ENCODE measurements at regions of chr9 and their contacts with region 1.

Region 1: GRCh38 chr9:20622330-20623020 is at the start of gene MLLT3:
- DNase-seq: peak; percentile 81 to 84 (median 83)
- H3K4me3 ChIP-seq: peak within 1 kb of the TSS; percentile 90 to 95 (median 92)
- H3K4me3 Mint-ChIP-seq: peak within 1 kb of the TSS; percentile 99 to 100
- H3K27ac ChIP-seq: peak within 1 kb of the TSS in 1 of 2 donors; percentile 28
- H3K27ac Mint-ChIP-seq: peak within 1 kb of the TSS; percentile 12 to 87 (median 72)
- H3K4me1 ChIP-seq: peaks cover 37 to 41% of the 10 kb centered on the region in 2 donors
- H3K4me1 Mint-ChIP-seq: peaks cover 37% of the 10 kb centered on the region
- H3K27me3 ChIP-seq: peaks cover 8 to 24% of the 10 kb centered on the region in 2 donors
- H3K27me3 Mint-ChIP-seq: peaks cover 24 to 38% (median 32%) of the 10 kb centered on the region in 3 donors
- CTCF ChIP-seq: no peak
- polyA plus RNA-seq, gene MLLT3: 0.81 to 2.3 (median 1.5) TPM

Region 2: DNA sequence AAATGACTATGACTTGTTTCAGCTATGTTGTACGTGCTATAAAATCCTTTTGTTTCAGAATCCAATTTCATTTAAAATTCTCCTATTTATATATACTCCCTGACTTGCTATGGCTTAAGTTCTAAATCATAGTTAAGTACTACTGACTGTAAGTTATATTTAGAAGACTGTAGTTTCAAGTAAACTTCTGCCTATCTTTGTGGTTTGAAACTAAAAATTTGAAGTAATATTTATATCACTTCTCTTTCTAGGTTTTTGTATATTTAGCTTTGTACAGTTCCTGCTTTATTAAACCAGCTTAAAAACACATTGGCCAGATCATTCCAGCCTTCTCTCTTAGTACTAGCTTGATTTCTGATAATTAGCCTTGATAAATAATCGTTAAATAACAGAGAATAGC is 196.5 kb before region 1 on chr9:
- intact Hi-C with region 1: no loop called
- DNase-seq: no peak
- H3K4me3 ChIP-seq: no peak overlapping the region
- H3K4me3 Mint-ChIP-seq: no peak overlapping the region
- H3K27ac ChIP-seq: no peak overlapping the region
- H3K27ac Mint-ChIP-seq: no peak overlapping the region
- H3K4me1 ChIP-seq: no peaks in the 10 kb centered on the region
- H3K4me1 Mint-ChIP-seq: peaks cover 12% of the 10 kb centered on the region
- H3K27me3 ChIP-seq: no peaks in the 10 kb centered on the region
- H3K27me3 Mint-ChIP-seq: peaks cover 0 to 2% (median 0%) of the 10 kb centered on the region in 3 donors
- CTCF ChIP-seq: no peak

Region 3: GRCh38 chr9:20684035-20684872 is 61.8 kb after region 1 on chr9 and contains the start of gene FOCAD:
- intact Hi-C with region 1: loop called in 1 of 2 experiments (anchors 5 kb)
- DNase-seq: peak; percentile 90 to 93 (median 92)
- H3K4me3 ChIP-seq: peak within 1 kb of the TSS; percentile 95 to 96 (median 95)
- H3K4me3 Mint-ChIP-seq: peak within 1 kb of the TSS; percentile 91 to 93
- H3K27ac ChIP-seq: peak within 1 kb of the TSS; percentile 68 to 89
- H3K27ac Mint-ChIP-seq: peak within 1 kb of the TSS; percentile 60 to 91 (median 89)
- H3K4me1 ChIP-seq: peaks cover 15 to 29% of the 10 kb centered on the region in 2 donors
- H3K4me1 Mint-ChIP-seq: peaks cover 22% of the 10 kb centered on the region
- H3K27me3 ChIP-seq: no peaks in the 10 kb centered on the region
- H3K27me3 Mint-ChIP-seq: no peaks in the 10 kb centered on the region
- CTCF ChIP-seq: no peak
- polyA plus RNA-seq, gene FOCAD: 4.9 to 6.3 (median 5.1) TPM

Region 4: DNA sequence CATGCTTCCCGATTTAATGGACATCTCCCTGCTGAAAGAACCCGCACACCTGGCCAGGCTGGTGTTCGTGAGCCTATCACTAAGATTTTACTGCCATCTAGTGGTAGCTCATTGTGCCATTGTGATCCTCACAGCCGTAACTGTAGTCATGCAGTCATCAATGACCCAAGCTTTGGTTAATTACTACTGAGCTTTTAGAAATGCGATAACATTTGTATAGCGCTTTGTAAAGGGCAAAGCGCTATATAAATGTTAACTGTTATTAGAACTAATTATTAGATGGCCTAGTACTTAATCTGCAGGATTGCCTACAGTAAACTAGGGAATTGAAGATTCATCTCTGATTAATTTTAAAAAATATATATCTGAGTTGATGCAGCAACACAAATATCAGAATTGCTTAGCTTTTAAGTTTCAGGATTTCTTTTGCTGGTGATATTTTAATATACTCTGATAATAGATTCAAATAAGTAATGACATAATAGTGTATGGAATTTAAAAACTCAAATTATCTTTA is 318.8 kb after region 1 on chr9:
- intact Hi-C with region 1: loop called in 1 of 2 experiments (anchors 10 kb)
- DNase-seq: peak; percentile 36 to 75 (median 61)
- H3K4me3 ChIP-seq: no peak overlapping the region
- H3K4me3 Mint-ChIP-seq: no peak overlapping the region
- H3K27ac ChIP-seq: no peak overlapping the region
- H3K27ac Mint-ChIP-seq: peak overlapping the region in 1 of 7 donors; percentile 62
- H3K4me1 ChIP-seq: no peaks in the 10 kb centered on the region
- H3K4me1 Mint-ChIP-seq: peaks cover 3% of the 10 kb centered on the region
- H3K27me3 ChIP-seq: no peaks in the 10 kb centered on the region
- H3K27me3 Mint-ChIP-seq: peaks cover 0 to 3% (median 0%) of the 10 kb centered on the region in 3 donors
- CTCF ChIP-seq: peak; percentile 89

Region 5: DNA sequence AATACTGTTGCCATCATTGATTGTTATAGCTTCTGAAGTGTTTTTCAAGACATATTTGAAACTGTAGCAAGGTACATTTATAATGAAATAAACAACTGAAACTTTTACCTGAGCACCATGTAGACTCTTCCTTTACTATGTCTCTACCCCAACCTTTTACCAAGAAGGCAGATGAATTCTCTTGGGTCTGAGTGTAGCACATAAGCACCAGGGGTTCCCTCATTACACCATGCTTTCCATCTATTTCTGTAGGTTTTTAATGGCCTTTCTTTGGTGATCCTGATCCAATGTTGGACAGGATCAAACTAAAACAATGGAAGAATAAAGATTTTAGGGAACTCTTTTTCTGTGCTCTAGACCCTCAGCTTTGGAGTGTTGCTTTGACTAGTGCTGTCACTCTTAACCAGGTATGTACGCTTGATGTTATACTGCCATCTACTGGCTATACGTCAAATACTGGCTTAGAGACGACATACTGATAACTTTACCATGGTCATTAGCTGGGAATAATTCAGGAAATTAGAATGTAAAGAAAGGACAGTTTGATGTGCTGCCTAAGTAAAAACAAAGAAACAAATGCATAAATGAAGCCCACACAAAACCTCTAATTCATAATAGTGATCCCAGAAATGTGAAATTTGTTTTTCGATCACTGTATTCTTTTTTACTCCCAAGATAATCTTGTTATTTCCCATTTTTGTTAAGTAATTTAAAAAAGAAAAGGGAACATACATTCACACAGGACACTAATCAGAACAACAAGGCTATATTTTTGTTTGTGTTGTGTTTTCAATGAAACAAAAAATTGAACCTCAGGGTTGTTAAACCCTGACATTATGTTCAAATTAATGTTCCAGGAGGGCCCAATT is 488.5 kb after region 1 on chr9:
- intact Hi-C with region 1: loop called in 1 of 2 experiments (anchors 10 kb)
- DNase-seq: peak; percentile 62 to 79 (median 77)
- H3K4me3 ChIP-seq: no peak overlapping the region
- H3K4me3 Mint-ChIP-seq: no peak overlapping the region
- H3K27ac ChIP-seq: no peak overlapping the region
- H3K27ac Mint-ChIP-seq: no peak overlapping the region
- H3K4me1 ChIP-seq: peaks cover 0 to under 1% of the 10 kb centered on the region in 2 donors
- H3K4me1 Mint-ChIP-seq: peaks cover 6% of the 10 kb centered on the region
- H3K27me3 ChIP-seq: no peaks in the 10 kb centered on the region
- H3K27me3 Mint-ChIP-seq: peaks cover 0 to 2% (median 0%) of the 10 kb centered on the region in 3 donors
- CTCF ChIP-seq: peak; percentile 87